Heart right ventricle (tissue), 16 donors: ENCODE measurements at regions of chr1 and their contacts with region 1.

Region 1: GRCh38 chr1:225881969-225882693 is at the start of gene TMEM63A:
- DNase-seq: peak; percentile 94 to 97
- ATAC-seq: peak; percentile 90 to 96 (median 95)
- H3K4me3 ChIP-seq: peak within 1 kb of the TSS; percentile 88 to 100 (median 98)
- H3K27ac ChIP-seq: peak within 1 kb of the TSS; percentile 85 to 98 (median 95)
- H3K4me1 ChIP-seq: peaks cover 27 to 59% (median 52%) of the 10 kb centered on the region in 9 donors
- H3K27me3 ChIP-seq: no peaks in the 10 kb centered on the region
- CTCF ChIP-seq: peak in 8 of 9 donors; percentile 22 to 64 (median 48)
- total RNA-seq, gene TMEM63A: 20.9 to 33.5 (median 24.7) TPM

Region 2: DNA sequence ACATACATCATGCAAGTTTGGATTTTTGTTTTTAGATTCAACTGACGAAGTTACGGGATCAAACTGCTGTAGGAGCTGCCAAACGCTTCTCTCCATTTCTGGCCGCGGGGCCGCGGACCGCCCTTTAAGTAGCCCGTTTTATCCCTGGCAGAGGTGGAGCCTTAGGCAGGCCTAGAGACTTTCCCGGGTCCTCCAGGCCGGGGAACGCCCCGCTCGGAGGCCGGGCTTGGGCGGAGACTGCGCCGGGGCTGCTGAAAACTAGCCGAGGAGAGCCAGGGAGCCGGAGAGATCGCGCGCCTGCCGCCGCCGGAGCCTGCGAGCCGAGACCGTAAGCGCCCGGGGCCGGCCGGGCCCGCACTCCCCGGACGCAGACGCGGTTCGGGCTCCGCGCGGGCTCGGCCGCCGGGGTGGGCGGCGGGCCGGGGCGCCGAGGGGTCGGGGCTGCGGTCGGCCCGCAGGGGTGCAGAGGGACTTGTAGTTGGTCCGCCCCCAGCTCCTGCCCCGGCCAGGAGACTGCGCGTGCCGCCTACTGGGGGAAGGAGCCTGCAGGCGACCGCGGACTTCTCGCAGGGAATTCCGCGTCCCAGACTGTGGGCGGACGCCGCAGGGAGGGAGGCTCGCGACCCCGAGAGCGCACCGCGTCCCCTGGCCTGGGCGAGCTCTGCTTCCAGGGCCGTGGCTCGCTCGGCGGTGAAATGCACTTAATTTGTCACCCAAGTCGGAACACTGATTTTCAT is 72.1 kb before region 1 on chr1 and contains the start of gene EPHX1:
- intact Hi-C with region 1: loop called in 3 of 10 experiments (anchors 2 to 5 kb)
- DNase-seq: peak; percentile 91 to 93
- ATAC-seq: peak; percentile 81 to 92 (median 88)
- H3K4me3 ChIP-seq: peak within 1 kb of the TSS; percentile 33 to 95 (median 77)
- H3K27ac ChIP-seq: peak within 1 kb of the TSS; percentile 75 to 97 (median 88)
- H3K4me1 ChIP-seq: peaks cover 16 to 52% (median 45%) of the 10 kb centered on the region in 9 donors
- H3K27me3 ChIP-seq: no peaks in the 10 kb centered on the region
- CTCF ChIP-seq: peak; percentile 16 to 58 (median 39)
- total RNA-seq, gene EPHX1: 34.9 to 80.8 (median 48.4) TPM

Region 3: DNA sequence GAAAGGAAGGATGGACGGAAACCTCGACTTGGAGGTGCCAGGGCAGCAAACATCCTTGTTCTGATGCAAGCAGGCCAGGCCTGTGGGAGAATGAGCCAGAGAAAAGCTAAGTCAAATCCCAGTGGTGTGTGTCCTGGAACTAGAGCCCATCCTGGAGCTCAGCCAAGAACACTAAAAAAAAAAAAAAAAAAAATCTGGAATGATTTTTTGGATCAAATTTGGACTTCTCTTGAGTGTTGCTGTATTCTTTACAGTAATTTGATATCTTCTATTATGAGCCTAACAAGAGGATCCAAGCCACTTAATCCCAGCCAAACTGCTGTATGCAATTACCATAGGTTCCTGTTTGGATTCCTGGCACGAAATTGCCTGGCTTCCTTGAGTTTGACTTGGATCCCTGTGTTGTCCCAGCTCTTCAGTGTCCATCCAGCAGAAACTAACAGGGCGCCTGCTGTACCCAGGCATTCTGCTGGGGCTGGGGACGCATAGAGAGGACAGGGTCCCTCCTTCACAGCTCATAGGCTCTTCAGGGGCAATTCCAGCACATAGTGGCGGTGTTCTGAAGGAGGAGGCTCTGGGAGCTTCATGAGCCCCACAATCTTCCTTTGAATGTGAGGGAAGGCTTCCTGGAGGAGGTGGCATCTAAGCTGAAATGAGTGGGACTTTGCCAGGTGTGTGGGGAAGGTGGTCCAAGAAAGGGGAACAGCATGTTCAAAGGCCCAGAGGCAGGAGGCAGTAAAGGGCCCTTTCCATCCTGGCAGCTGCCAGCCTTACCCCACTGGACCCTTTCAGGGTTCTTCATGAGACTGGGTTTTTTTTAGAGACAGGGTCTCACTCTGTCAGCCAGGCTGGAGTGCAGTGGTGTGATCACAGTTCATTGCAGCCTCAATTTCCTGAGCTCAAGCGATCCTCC is 47.5 kb before region 1 on chr1:
- intact Hi-C with region 1: loop called in 1 of 10 experiments (anchors 1 kb)
- DNase-seq: peak; percentile 56 to 68
- ATAC-seq: peak; percentile 80 to 91 (median 88)
- H3K4me3 ChIP-seq: no peak overlapping the region
- H3K27ac ChIP-seq: peak overlapping the region; percentile 10 to 79 (median 52)
- H3K4me1 ChIP-seq: peaks cover 0 to 35% (median 26%) of the 10 kb centered on the region in 9 donors
- H3K27me3 ChIP-seq: no peaks in the 10 kb centered on the region
- CTCF ChIP-seq: no peak

Region 4: GRCh38 chr1:225911191-225912130 is 29.3 kb after region 1 on chr1:
- intact Hi-C with region 1: loop called in 3 of 10 experiments (anchors 1 to 5 kb)
- DNase-seq: peak; percentile 50 to 81
- ATAC-seq: peak; percentile 80 to 95 (median 90)
- H3K4me3 ChIP-seq: peak overlapping the region in 5 of 10 donors; percentile 19 to 35 (median 26)
- H3K27ac ChIP-seq: no peak overlapping the region
- H3K4me1 ChIP-seq: peaks cover 0 to 13% (median 4%) of the 10 kb centered on the region in 9 donors
- H3K27me3 ChIP-seq: no peaks in the 10 kb centered on the region
- CTCF ChIP-seq: peak; percentile 88 to 98 (median 96)

Region 5: DNA sequence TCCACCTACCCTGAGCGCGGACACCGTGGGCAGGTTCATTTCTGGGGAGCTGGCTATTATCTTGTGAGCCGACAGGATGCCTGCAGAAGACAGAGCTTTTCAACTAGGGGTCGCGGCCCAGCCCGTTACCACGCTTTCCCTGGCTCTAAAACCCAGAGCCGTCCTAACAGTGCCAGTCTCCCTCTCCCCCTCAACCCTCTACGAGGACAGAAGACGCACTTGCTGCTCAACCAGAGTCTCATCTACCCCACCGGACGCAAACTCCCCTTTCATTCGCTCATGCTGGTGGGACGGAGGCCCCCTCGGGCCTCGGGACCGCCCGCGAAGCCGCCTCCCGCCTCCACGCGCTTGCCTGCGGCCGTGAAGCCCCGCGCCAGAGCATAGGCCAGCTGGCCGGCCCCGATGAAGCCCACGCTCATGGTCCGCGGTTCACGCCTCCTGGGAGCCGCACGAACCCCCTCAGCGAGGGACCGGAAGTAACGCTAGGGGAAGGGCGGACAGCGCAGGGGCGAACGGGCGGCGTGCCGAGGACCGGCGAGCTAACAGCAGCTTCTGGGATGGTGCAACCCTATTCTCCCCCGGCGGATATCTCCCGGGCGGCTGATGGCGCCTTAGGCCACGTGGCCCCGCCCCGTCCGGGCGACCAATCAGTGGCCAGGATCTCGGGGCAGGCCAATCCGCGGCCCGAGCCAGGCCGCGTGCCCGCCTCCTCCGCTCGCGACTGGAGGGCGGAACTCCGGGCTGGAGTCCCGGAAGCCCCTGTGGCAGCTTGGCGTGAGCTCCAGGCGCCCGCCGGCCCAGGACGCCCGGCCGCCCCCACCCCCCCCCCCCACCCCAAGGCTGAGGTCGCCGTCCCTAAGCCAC is 41.8 kb after region 1 on chr1 and contains the start of gene PYCR2:
- intact Hi-C with region 1: loop called in 1 of 10 experiments (anchors 5 kb)
- DNase-seq: peak; percentile 94 to 96
- ATAC-seq: peak; percentile 99 to 100 (median 99)
- H3K4me3 ChIP-seq: peak within 1 kb of the TSS; percentile 63 to 95 (median 82)
- H3K27ac ChIP-seq: peak within 1 kb of the TSS; percentile 74 to 98 (median 93)
- H3K4me1 ChIP-seq: peaks cover 5 to 45% (median 27%) of the 10 kb centered on the region in 9 donors
- H3K27me3 ChIP-seq: no peaks in the 10 kb centered on the region
- CTCF ChIP-seq: peak in 3 of 9 donors; percentile 5 to 12 (median 8)
- total RNA-seq, gene PYCR2: 53.6 to 77.4 (median 62.7) TPM

Region 6: GRCh38 chr1:226457307-226457712 is 575.2 kb after region 1 on chr1:
- intact Hi-C with region 1: no loop called
- DNase-seq: no peak
- ATAC-seq: no peak
- H3K4me3 ChIP-seq: no peak overlapping the region
- H3K27ac ChIP-seq: peak overlapping the region in 1 of 10 donors; percentile 38
- H3K4me1 ChIP-seq: no peaks in the 10 kb centered on the region
- H3K27me3 ChIP-seq: peaks cover 0 to 16% (median 0%) of the 10 kb centered on the region in 7 donors
- CTCF ChIP-seq: peak in 3 of 9 donors; percentile 12 to 26 (median 14)